CD8-positive, alpha-beta memory T cell (primary cell): ENCODE measurements at regions of chr5 and their contacts with region 1.

Region 1: GRCh38 chr5:93909356-93909755 is 168.0 kb upstream of the POU5F2 start:
- DNase-seq: no peak
- H3K4me3 ChIP-seq: no peak overlapping the region
- H3K4me3 Mint-ChIP-seq: no peak overlapping the region
- H3K27ac ChIP-seq: no peak overlapping the region
- H3K27ac Mint-ChIP-seq: no peak overlapping the region
- H3K4me1 ChIP-seq: no peaks in the 10 kb centered on the region
- H3K4me1 Mint-ChIP-seq: no peaks in the 10 kb centered on the region
- H3K27me3 ChIP-seq: no peaks in the 10 kb centered on the region
- H3K27me3 Mint-ChIP-seq: no peaks in the 10 kb centered on the region

Region 2: DNA sequence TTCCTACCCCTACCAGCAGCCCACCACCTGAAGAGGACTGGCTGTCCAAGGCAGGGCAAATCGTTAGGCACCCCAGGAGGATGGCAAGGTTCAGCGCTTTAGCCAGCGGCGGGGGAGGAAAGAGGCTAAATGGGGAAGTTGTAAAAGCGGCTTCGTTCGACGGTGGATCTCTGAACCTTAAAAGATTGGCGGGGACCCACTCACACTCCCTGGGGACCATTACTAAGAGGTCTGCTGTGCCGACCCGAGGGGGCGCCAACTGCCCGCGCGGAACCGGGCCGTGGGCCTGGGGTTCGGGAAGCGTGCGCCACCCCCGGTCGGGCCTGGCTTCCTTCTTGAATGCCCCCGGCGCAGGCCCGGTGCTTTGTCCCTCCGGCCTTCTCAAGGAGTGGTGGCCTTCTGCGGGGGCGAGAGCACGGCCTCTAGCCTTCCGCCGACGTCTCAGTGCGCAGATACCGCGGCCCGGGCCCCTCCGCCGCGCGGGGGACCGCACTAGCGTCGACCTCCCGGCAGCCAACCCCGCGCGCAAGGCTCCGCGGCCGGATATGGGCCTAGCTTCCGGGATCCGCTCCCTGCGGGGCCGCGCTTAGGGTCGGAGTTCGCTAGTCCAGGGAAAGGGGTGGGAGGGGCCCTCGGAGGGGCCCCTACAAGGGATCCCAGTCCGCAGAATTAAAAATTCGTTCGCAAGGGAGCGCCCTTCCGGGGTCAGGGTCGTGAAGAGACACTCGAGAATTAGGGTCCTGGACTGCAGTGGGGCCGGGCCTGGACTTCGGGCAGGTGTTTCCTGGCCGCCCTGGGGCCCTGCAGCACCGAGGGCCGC is 338.9 kb before region 1 on chr5:
- CTCF ChIA-PET with region 1: no interaction called
- POLR2A ChIA-PET with region 1: interaction called, 10 read pairs
- DNase-seq: no peak
- H3K4me3 ChIP-seq: no peak overlapping the region
- H3K4me3 Mint-ChIP-seq: peak overlapping the region in 6 of 7 donors; percentile 8 to 62 (median 35)
- H3K27ac ChIP-seq: no peak overlapping the region
- H3K27ac Mint-ChIP-seq: peak overlapping the region in 2 of 8 donors; percentile 34 to 50
- H3K4me1 ChIP-seq: peaks cover 12% of the 10 kb centered on the region
- H3K4me1 Mint-ChIP-seq: peaks cover 13 to 29% (median 18%) of the 10 kb centered on the region in 3 donors
- H3K27me3 ChIP-seq: peaks cover 64% of the 10 kb centered on the region
- H3K27me3 Mint-ChIP-seq: peaks cover 78 to 86% of the 10 kb centered on the region in 2 donors